Natural killer cell (primary cell): ENCODE measurements at regions of chr11 and their contacts with region 1.

Region 1: GRCh38 chr11:133491680-133492383 is 40.5 kb downstream of the OPCML start:
- DNase-seq: no peak
- ATAC-seq: no peak
- H3K4me3 ChIP-seq: no peak overlapping the region
- H3K4me3 Mint-ChIP-seq: no peak overlapping the region
- H3K27ac ChIP-seq: no peak overlapping the region
- H3K27ac Mint-ChIP-seq: no peak overlapping the region
- H3K4me1 ChIP-seq: no peaks in the 10 kb centered on the region
- H3K4me1 Mint-ChIP-seq: no peaks in the 10 kb centered on the region
- H3K27me3 ChIP-seq: no peaks in the 10 kb centered on the region
- H3K27me3 Mint-ChIP-seq: no peaks in the 10 kb centered on the region
- CTCF ChIP-seq: no peak

Region 2: GRCh38 chr11:132486060-132486459 is 1005.8 kb before region 1 on chr11:
- intact Hi-C with region 1: loop called (anchors 10 kb)
- DNase-seq: no peak
- ATAC-seq: no peak
- H3K4me3 ChIP-seq: no peak overlapping the region
- H3K4me3 Mint-ChIP-seq: no peak overlapping the region
- H3K27ac ChIP-seq: no peak overlapping the region
- H3K27ac Mint-ChIP-seq: no peak overlapping the region
- H3K4me1 ChIP-seq: no peaks in the 10 kb centered on the region
- H3K4me1 Mint-ChIP-seq: no peaks in the 10 kb centered on the region
- H3K27me3 ChIP-seq: no peaks in the 10 kb centered on the region
- H3K27me3 Mint-ChIP-seq: no peaks in the 10 kb centered on the region
- CTCF ChIP-seq: no peak

Region 3: GRCh38 chr11:133041928-133042882 is 449.6 kb before region 1 on chr11:
- intact Hi-C with region 1: no loop called
- DNase-seq: no peak
- ATAC-seq: no peak
- H3K4me3 ChIP-seq: no peak overlapping the region
- H3K4me3 Mint-ChIP-seq: no peak overlapping the region
- H3K27ac ChIP-seq: no peak overlapping the region
- H3K27ac Mint-ChIP-seq: no peak overlapping the region
- H3K4me1 ChIP-seq: no peaks in the 10 kb centered on the region
- H3K4me1 Mint-ChIP-seq: no peaks in the 10 kb centered on the region
- H3K27me3 ChIP-seq: no peaks in the 10 kb centered on the region
- H3K27me3 Mint-ChIP-seq: peaks cover 0 to 2% of the 10 kb centered on the region in 2 donors
- CTCF ChIP-seq: no peak